Activated naive CD4-positive, alpha-beta T cell treated with anti-CD3 and anti-CD28 coated beads for 36 hours (primary cell): ENCODE measurements at regions of chr14 and their contacts with region 1.

Region 1: GRCh38 chr14:75293920-75294642 is 15.5 kb downstream of the FOS start:
- DNase-seq: peak; percentile 91
- H3K4me3 Mint-ChIP-seq: peak overlapping the region; percentile 80
- H3K27ac Mint-ChIP-seq: no peak overlapping the region
- H3K4me1 Mint-ChIP-seq: peaks cover 20% of the 10 kb centered on the region
- H3K27me3 Mint-ChIP-seq: peaks cover 3% of the 10 kb centered on the region

Region 2: DNA sequence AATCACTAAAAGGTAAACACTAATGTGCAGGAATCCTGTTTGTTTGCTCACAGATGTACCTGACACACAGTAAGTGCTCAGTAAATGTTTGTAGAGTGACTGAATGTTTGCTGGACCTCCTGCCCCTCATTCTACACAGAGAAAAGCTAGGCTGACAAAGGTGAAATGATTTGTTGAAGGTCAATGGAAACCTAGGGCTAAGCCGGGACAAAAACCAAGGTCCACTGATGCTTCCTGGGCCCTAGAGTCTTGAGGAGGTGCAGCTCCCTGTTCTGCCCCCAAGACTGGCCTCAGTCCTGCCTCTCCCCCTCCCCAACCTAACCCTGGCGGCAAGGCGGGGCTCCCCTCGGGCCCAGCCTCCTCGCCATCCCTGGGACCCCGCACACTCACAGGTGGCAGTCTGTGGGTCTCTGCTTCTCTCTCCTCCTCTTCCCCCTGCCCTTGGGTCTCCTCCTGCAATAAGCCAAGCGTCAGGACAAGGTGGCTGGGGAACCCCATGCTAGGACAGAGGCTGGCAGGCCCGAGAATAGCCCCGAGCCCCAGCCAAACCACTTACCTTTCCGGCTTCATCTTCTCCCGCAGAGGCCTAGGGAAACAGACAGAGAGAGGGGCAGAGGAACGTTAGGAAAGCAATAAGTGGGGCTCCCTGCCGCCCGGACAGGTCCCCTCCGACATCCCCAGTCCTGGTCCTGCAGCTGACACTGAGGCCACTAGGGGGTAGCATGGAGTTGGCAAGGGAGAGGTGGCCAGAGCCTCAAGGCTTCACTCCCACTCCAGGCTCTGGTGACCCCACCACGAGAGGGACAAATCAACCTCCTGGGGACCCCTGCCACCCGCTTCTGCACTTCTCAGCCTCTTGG is 348.0 kb before region 1 on chr14:
- CTCF ChIA-PET with region 1: interaction called, 3 read pairs
- intact Hi-C with region 1: loop called (anchors 2 kb)
- DNase-seq: peak; percentile 87
- H3K4me3 Mint-ChIP-seq: peak overlapping the region; percentile 50
- H3K27ac Mint-ChIP-seq: peak overlapping the region; percentile 62
- H3K4me1 Mint-ChIP-seq: peaks cover 26% of the 10 kb centered on the region
- H3K27me3 Mint-ChIP-seq: peaks cover under 1% of the 10 kb centered on the region

Region 3: DNA sequence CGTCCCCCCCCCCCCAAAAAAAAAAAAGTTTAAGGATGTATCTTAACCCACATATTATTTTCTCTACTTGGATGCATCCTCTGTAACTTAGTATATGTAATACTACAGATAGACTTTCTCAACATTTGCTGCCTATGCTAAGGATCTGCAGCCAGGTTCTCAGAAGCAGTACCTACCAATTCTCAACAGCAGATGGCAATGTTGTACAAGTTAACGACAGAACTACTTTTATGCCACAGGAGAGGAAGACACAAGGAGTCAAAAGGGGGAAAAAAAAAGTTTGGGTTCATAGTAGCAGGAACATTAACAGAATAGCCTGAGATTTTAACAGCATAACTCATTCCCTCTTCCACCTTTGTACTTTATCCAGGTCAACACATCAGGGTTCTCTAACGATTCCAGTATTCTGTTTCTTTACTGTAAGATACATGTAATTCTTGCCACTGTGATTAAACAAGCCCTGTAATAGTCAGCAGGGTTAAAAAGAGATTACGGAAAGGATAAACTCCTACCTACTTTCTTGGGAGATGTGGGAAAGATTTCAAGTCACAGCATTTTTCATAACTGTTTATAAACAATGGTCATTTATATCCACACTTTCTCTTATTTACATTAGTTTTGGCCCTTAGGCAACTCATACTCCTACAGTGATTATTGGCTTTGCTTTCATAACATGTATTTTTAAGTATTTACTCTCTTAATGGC is 161.5 kb before region 1 on chr14:
- CTCF ChIA-PET with region 1: interaction called, 78 read pairs
- intact Hi-C with region 1: loop called (anchors 1 kb)
- DNase-seq: peak; percentile 64
- H3K4me3 Mint-ChIP-seq: no peak overlapping the region
- H3K27ac Mint-ChIP-seq: peak overlapping the region; percentile 24
- H3K4me1 Mint-ChIP-seq: peaks cover 19% of the 10 kb centered on the region
- H3K27me3 Mint-ChIP-seq: no peaks in the 10 kb centered on the region

Region 4: GRCh38 chr14:75230140-75231045 is 63.7 kb before region 1 on chr14:
- CTCF ChIA-PET with region 1: no interaction called
- intact Hi-C with region 1: loop called (anchors 1 kb)
- DNase-seq: peak; percentile 81
- H3K4me3 Mint-ChIP-seq: no peak overlapping the region
- H3K27ac Mint-ChIP-seq: no peak overlapping the region
- H3K4me1 Mint-ChIP-seq: peaks cover 46% of the 10 kb centered on the region
- H3K27me3 Mint-ChIP-seq: no peaks in the 10 kb centered on the region

Region 5: DNA sequence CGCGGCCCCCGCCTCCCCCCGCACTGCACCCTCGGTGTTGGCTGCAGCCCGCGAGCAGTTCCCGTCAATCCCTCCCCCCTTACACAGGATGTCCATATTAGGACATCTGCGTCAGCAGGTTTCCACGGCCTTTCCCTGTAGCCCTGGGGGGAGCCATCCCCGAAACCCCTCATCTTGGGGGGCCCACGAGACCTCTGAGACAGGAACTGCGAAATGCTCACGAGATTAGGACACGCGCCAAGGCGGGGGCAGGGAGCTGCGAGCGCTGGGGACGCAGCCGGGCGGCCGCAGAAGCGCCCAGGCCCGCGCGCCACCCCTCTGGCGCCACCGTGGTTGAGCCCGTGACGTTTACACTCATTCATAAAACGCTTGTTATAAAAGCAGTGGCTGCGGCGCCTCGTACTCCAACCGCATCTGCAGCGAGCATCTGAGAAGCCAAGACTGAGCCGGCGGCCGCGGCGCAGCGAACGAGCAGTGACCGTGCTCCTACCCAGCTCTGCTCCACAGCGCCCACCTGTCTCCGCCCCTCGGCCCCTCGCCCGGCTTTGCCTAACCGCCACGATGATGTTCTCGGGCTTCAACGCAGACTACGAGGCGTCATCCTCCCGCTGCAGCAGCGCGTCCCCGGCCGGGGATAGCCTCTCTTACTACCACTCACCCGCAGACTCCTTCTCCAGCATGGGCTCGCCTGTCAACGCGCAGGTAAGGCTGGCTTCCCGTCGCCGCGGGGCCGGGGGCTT is 15.5 kb before region 1 on chr14 and contains the start of gene FOS:
- CTCF ChIA-PET with region 1: interaction called, 14 read pairs
- intact Hi-C with region 1: loop called (anchors 1 kb)
- DNase-seq: peak; percentile 92
- H3K4me3 Mint-ChIP-seq: peak within 1 kb of the TSS; percentile 93
- H3K27ac Mint-ChIP-seq: peak within 1 kb of the TSS; percentile 90
- H3K4me1 Mint-ChIP-seq: peaks cover 29% of the 10 kb centered on the region
- H3K27me3 Mint-ChIP-seq: peaks cover 26% of the 10 kb centered on the region
- total RNA-seq, gene FOS: 34.5 to 35.7 TPM